Common myeloid progenitor, CD34-positive (primary cell): ENCODE measurements at regions of chr18 and their contacts with region 1.

Region 1: DNA sequence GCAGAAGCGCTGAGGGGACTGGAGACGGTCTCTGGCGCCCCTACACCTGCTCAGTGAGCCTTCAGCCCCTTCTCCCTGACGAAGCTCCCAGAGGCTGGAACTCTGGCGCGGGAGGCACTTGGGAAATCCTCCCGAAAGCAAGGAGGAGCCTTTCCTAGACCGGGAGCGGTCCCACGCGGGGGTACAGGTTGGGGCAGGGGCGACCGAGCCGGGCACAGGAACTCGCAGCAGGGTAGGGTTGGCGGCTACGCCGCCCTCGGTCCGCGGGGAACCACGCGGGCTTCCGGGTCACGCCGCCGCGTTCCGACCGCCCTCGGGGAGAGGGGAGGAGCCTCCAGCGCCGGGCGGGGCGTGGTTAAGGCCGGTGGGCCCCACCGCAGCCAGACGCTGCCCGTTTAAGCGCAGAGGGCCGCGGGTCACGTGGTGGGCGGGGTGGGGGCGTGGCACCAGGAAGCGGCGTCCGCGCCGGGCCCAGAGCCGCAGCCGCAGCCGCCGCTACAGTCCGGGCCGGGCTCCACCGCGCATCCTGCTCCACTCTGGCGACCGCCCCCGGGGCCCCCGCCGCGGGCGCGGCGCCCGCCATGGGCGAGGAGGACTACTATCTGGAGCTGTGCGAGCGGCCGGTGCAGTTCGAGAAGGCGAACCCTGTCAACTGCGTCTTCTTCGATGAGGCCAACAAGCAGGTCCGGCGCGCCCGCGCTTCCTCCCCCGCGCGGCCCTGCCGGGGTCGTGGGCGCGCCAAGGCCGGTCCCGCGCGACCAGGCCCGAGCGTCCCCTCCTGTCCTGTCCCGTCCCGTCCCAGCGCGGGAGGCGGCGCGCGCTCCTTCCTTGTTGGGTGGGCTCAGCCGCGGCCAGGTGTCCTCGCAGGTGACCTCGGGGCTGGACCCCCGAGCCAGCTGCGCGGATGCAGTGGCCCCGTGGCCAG is at the start of gene RMC1:
- DNase-seq: peak; percentile 94 to 97 (median 97)
- H3K4me3 ChIP-seq: peak within 1 kb of the TSS; percentile 68 to 92 (median 85)
- H3K27ac ChIP-seq: peak within 1 kb of the TSS; percentile 84 to 94
- H3K4me1 ChIP-seq: peaks cover 24 to 57% (median 49%) of the 10 kb centered on the region in 4 experiments
- H3K27me3 ChIP-seq: no peaks in the 10 kb centered on the region

Region 2: DNA sequence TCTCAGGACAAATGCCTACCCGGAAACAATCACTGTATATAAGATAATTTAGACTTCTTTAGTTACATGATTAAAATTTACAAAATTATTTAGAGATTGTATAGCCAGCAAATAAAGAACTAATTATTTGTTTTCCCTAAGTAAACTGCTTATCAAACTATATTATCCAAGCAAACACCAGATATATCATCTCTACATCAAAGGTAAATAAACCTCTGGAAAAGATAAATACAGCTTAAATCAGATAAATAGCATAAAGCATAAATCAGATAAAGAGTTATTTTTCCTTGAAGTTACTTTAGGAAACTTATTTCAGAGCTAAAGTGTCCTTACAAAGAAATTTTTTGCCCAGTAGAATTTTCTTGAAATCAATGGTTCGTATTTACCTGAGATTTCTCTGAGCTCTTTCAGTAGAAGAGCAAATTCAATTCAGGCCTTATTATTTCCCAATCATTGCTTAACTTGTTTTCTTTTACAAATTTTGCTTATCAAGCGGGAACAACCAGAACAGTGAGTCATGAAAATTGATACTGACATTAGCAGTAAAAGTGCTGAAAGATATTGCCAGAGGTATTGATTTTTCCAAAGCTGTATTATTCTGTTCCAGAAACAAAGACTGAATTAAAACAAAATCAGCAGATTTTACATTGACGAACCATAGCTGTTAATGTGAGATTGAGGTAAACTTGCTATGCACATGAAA is 60.5 kb before region 1 on chr18:
- CTCF ChIA-PET with region 1: no interaction called
- POLR2A ChIA-PET with region 1: no interaction called
- DNase-seq: no peak
- H3K4me3 ChIP-seq: no peak overlapping the region
- H3K27ac ChIP-seq: no peak overlapping the region
- H3K4me1 ChIP-seq: peaks cover 2 to 6% (median 3%) of the 10 kb centered on the region in 4 experiments
- H3K27me3 ChIP-seq: no peaks in the 10 kb centered on the region

Region 3: GRCh38 chr18:23471486-23471885 is 31.8 kb before region 1 on chr18:
- CTCF ChIA-PET with region 1: interaction called, 24 read pairs
- POLR2A ChIA-PET with region 1: no interaction called
- DNase-seq: no peak
- H3K4me3 ChIP-seq: no peak overlapping the region
- H3K27ac ChIP-seq: no peak overlapping the region
- H3K4me1 ChIP-seq: peaks cover 0 to 4% (median 2%) of the 10 kb centered on the region in 4 experiments
- H3K27me3 ChIP-seq: no peaks in the 10 kb centered on the region

Region 4: DNA sequence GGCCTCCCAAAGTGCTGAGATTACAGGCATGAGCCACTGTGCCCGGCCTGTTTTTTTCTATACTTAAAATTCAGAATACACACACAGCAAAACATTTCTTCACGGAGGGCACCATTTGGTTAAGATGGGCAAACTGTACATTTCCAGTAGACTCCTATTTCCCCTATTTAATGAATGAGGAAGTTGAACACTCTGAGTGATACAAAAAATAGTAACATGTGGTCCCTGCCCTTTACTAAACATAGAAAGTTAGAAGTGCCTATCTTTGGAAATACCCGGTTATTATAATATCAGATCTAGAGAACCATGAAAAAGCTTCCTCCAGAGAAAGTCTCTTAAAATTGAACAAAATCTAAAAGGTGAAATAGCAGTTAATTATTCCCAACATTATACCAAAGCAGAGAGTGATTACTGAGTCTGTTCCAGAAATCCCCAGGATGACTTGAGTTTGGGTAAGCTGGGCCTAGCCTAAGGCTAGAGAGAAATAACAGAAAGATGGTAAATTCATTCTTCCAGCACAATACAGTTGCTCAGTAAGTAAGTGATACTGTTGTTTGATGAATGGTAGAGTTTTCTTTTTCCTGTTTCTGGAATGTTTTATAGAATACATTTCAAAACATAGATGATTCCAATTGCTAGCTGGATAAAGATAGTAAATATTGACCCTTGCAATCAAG is 23.3 kb before region 1 on chr18:
- CTCF ChIA-PET with region 1: interaction called, 24 read pairs
- POLR2A ChIA-PET with region 1: no interaction called
- DNase-seq: peak in 2 of 3 donors; percentile 77 to 83
- H3K4me3 ChIP-seq: no peak overlapping the region
- H3K27ac ChIP-seq: no peak overlapping the region
- H3K4me1 ChIP-seq: peaks cover 6 to 19% (median 17%) of the 10 kb centered on the region in 4 experiments
- H3K27me3 ChIP-seq: no peaks in the 10 kb centered on the region

Region 5: DNA sequence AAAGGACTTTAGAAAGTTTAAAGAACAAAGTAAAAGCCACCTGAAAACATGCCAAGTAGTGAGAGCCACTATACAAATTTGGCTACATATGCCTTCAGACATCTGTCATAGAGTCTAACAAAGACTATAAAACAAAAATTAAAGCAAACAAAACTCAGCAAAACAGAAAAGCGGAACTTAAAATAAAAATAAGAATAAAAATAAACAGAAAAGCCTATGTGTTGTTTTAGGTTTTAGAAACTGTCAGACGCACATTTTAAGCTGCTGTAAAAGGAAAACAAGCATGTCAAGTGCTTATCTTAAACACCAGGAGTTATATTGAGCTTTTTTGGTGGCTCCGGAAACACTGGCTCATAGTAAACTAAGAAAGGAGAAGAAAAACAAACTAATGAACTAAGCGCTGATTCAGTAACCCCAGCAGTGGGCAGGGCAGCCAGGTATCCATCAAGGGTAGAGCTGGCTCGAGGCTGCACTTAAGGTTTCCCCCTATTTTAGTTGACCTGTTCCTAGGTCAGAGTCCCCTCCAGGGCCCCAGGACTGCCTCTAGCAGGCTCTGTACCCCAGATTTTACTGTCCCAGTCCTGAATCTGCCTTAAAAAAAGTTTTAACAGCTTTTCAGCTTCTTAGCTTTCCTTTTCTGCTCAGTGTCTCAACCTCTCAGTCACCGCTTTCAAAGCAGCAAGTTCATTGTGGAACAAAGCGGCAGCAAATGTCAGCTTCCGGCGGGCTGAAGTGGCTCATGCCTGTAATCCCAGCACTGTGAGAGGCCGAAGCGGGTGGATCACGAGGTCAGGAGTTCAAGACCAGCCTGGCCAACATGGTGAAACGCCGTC is 15.3 kb before region 1 on chr18:
- CTCF ChIA-PET with region 1: interaction called, 32 read pairs
- POLR2A ChIA-PET with region 1: interaction called, 7 read pairs
- DNase-seq: peak; percentile 90 to 98 (median 95)
- H3K4me3 ChIP-seq: peak overlapping the region; percentile 25 to 75 (median 67)
- H3K27ac ChIP-seq: peak overlapping the region; percentile 89 to 97
- H3K4me1 ChIP-seq: peaks cover 6 to 33% (median 17%) of the 10 kb centered on the region in 4 experiments
- H3K27me3 ChIP-seq: no peaks in the 10 kb centered on the region